A673 (cell line): ENCODE measurements at regions of chr15 and their contacts with region 1.

Region 1: DNA sequence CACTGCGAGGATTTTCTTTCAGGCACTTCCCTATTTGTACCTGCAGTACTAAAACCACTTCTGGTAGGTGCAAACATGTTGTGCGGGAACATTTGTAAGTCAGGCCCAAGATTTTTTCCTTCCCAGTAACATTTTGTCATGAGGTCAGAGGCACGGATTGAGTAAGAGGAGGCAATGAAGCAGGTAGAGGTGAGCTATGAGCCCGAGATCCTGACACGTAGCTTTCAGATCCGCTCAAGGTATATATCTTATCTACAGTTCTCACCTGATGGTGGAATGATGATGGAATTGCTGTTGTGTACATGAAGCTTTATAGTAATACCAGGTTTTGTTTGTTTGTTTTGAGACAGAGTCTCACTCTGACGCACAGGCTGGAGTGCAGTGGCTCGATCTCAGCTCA is 497.5 kb downstream of the NR2F2 start:
- DNase-seq: no peak
- H3K4me3 ChIP-seq: no peak overlapping the region
- H3K27ac ChIP-seq: no peak overlapping the region
- H3K4me1 ChIP-seq: peaks cover 11% of the 10 kb centered on the region
- H3K27me3 ChIP-seq: no peaks in the 10 kb centered on the region
- CTCF ChIP-seq: no peak

Region 2: GRCh38 chr15:96767703-96768434 is 60.1 kb before region 1 on chr15:
- CTCF ChIA-PET with region 1: no interaction called
- POLR2A ChIA-PET with region 1: no interaction called
- intact Hi-C with region 1: loop called (anchors 5 kb)
- DNase-seq: no peak
- H3K4me3 ChIP-seq: no peak overlapping the region
- H3K27ac ChIP-seq: no peak overlapping the region
- H3K4me1 ChIP-seq: no peaks in the 10 kb centered on the region
- H3K27me3 ChIP-seq: no peaks in the 10 kb centered on the region
- CTCF ChIP-seq: no peak

Region 3: GRCh38 chr15:96807361-96807760 is 20.6 kb before region 1 on chr15:
- CTCF ChIA-PET with region 1: no interaction called
- POLR2A ChIA-PET with region 1: no interaction called
- intact Hi-C with region 1: no loop called
- DNase-seq: no peak
- H3K4me3 ChIP-seq: no peak overlapping the region
- H3K27ac ChIP-seq: no peak overlapping the region
- H3K4me1 ChIP-seq: no peaks in the 10 kb centered on the region
- H3K27me3 ChIP-seq: no peaks in the 10 kb centered on the region
- CTCF ChIP-seq: no peak

Region 4: GRCh38 chr15:97114900-97115760 is 287.1 kb after region 1 on chr15:
- CTCF ChIA-PET with region 1: no interaction called
- POLR2A ChIA-PET with region 1: no interaction called
- intact Hi-C with region 1: no loop called
- DNase-seq: no peak
- H3K4me3 ChIP-seq: no peak overlapping the region
- H3K27ac ChIP-seq: no peak overlapping the region
- H3K4me1 ChIP-seq: no peaks in the 10 kb centered on the region
- H3K27me3 ChIP-seq: no peaks in the 10 kb centered on the region
- CTCF ChIP-seq: no peak